Naive thymus-derived CD4-positive, alpha-beta T cell (primary cell): ENCODE measurements at regions of chr12 and their contacts with region 1.

Region 1: DNA sequence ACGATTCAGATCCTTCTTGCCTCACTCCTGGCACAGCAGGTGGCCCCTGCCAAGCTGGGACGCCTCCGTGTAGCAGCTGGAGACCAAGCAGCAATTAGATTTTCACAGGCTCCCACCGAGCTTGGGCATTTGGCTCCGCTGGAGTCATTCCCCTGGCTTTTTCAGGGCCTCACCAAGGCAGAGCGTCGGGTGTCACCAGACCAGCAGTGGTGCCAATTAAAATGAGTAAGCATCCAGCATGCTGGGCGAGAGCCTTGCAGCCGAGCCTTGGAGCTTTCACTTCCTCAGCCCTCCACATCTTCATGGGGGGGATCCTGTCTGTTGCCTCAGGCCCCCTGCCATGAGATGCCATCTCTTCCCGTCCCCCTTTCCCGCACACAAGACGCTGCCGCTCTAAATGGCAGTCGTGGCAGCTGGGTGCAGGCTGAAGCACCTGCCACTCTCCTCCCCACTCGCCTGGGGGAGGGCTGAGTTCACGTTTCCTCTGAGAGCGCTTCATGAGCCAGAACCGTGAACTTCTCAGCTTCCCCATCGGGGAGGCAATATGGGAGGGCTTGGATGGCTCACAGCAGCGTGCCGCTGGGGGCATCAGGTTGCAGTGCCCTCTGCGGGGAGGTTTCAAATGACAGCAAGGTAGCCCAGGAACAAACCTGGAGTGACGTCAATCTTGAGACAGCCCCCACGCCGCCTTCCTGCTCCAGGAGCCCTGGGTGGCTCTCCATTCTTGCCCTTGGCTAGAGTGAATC is 11.7 kb downstream of the TPCN1 start:
- DNase-seq: peak; percentile 46 to 91 (median 83)
- ATAC-seq: peak; percentile 95
- H3K4me3 ChIP-seq: peak overlapping the region; percentile 43
- H3K4me3 Mint-ChIP-seq: peak overlapping the region; percentile 81 to 94 (median 86)
- H3K27ac ChIP-seq: peak overlapping the region; percentile 68
- H3K27ac Mint-ChIP-seq: peak overlapping the region; percentile 86 to 96 (median 93)
- H3K4me1 ChIP-seq: peaks cover 7 to 60% of the 10 kb centered on the region in 2 donors
- H3K4me1 Mint-ChIP-seq: peaks cover 59 to 93% (median 75%) of the 10 kb centered on the region in 7 donors
- H3K27me3 ChIP-seq: no peaks in the 10 kb centered on the region
- H3K27me3 Mint-ChIP-seq: no peaks in the 10 kb centered on the region

Region 2: DNA sequence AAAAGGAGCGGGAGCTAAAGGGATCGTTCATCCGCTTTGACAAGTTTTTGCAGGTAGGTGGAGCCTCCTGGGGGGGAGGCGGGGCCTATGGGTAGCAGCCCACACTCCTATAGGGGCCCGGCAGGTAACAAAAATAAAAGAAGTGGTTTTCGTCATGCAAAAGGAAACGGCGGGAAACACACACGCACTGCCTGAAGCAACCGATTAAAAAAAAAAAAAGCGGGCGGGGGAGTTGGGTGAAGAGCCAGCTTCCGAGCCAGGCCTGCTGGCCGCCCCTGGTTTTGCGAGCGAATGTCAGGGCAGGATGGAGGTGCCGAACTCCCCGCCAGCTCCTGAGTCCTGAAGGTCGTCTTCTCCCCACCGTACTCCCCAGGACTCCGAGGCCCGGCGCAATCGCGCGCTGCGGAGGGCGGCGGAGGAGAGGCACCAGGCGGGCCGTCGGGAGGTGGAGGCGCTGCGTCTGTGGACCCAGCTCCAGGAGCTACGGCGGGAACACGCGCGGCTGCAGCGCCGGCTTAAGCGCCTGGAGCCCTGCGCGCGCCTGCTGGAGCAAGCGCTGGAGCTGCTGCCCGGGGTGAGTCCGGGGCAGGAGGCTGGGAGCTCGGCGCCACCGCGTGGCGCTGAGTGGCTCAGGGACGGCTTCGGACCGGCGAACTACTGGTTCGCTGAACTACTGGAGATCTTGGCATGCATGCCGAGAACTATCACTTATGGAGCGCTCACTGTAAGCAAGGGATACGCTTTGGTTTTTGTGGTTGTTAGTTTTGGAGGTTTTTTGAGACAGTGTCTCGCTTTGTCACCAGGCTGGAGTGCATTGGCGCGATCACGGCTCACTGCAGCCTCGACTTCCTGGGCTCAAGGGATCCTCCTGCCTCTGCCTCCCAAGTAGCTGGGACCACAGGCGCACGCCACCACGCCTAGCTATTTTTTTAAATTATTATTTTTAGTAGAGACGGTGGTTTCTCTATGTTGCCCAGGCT is 79.9 kb before region 1 on chr12:
- CTCF ChIA-PET with region 1: no interaction called
- POLR2A ChIA-PET with region 1: no interaction called
- intact Hi-C with region 1: no loop called
- DNase-seq: peak; percentile 36 to 86 (median 80)
- ATAC-seq: peak; percentile 94
- H3K4me3 ChIP-seq: peak overlapping the region; percentile 75
- H3K4me3 Mint-ChIP-seq: peak overlapping the region; percentile 76 to 88 (median 86)
- H3K27ac ChIP-seq: no peak overlapping the region
- H3K27ac Mint-ChIP-seq: peak overlapping the region in 6 of 9 donors; percentile 76 to 93 (median 85)
- H3K4me1 ChIP-seq: peaks cover 0 to 19% of the 10 kb centered on the region in 2 donors
- H3K4me1 Mint-ChIP-seq: peaks cover 0 to 27% (median 25%) of the 10 kb centered on the region in 7 donors
- H3K27me3 ChIP-seq: no peaks in the 10 kb centered on the region
- H3K27me3 Mint-ChIP-seq: peaks cover 0 to 36% (median 0%) of the 10 kb centered on the region in 5 donors

Region 3: GRCh38 chr12:113261847-113262470 is 28.9 kb after region 1 on chr12:
- CTCF ChIA-PET with region 1: interaction called, 6 read pairs
- POLR2A ChIA-PET with region 1: interaction called, 4 read pairs
- intact Hi-C with region 1: loop called (anchors 2 kb)
- DNase-seq: peak in 8 of 9 donors; percentile 25 to 63 (median 52)
- ATAC-seq: peak; percentile 72
- H3K4me3 ChIP-seq: peak overlapping the region; percentile 37
- H3K4me3 Mint-ChIP-seq: peak overlapping the region; percentile 55 to 88 (median 76)
- H3K27ac ChIP-seq: peak overlapping the region; percentile 58
- H3K27ac Mint-ChIP-seq: peak overlapping the region; percentile 77 to 95 (median 91)
- H3K4me1 ChIP-seq: peaks cover 14 to 53% of the 10 kb centered on the region in 2 donors
- H3K4me1 Mint-ChIP-seq: peaks cover 27 to 76% (median 55%) of the 10 kb centered on the region in 7 donors
- H3K27me3 ChIP-seq: no peaks in the 10 kb centered on the region
- H3K27me3 Mint-ChIP-seq: no peaks in the 10 kb centered on the region

Region 4: GRCh38 chr12:113276306-113276705 is 43.3 kb after region 1 on chr12:
- CTCF ChIA-PET with region 1: no interaction called
- POLR2A ChIA-PET with region 1: no interaction called
- intact Hi-C with region 1: loop called in 1 of 2 experiments (anchors 5 kb)
- DNase-seq: no peak
- ATAC-seq: no peak
- H3K4me3 ChIP-seq: no peak overlapping the region
- H3K4me3 Mint-ChIP-seq: no peak overlapping the region
- H3K27ac ChIP-seq: no peak overlapping the region
- H3K27ac Mint-ChIP-seq: no peak overlapping the region
- H3K4me1 ChIP-seq: no peaks in the 10 kb centered on the region
- H3K4me1 Mint-ChIP-seq: peaks cover 0 to 11% (median 5%) of the 10 kb centered on the region in 7 donors
- H3K27me3 ChIP-seq: no peaks in the 10 kb centered on the region
- H3K27me3 Mint-ChIP-seq: no peaks in the 10 kb centered on the region

Region 5: DNA sequence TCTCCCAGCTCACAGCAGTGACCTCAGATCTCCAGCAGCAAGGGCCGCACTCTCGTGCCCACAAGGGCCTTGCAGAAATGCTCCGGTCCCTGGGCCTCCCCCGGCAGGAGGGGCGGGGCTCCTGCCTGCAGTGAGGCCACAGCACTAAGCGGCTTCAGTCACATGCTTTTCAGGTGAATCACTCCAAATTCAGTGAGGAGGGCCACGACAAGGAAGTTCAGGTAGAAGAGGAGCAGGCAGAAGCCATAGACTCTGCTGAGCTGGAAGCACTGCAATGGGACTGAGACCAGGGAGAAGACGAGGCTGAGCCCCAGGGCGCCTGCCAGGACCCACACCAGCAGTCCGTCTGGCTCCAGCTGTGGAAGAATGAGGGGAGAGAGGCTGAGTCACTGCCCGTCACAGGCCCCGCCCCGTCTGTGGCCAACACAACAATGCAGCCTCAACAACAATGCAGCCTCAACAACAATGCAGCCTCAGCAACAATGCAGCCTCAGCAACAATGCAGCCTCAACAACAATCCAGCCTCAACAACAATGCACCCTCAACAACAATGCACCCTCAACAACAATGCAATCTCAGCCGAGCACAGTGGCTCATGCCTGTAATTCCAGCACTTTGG is 66.7 kb after region 1 on chr12:
- CTCF ChIA-PET with region 1: interaction called, 4 read pairs
- POLR2A ChIA-PET with region 1: no interaction called
- intact Hi-C with region 1: loop called in 1 of 2 experiments (anchors 5 kb)
- DNase-seq: no peak
- ATAC-seq: no peak
- H3K4me3 ChIP-seq: no peak overlapping the region
- H3K4me3 Mint-ChIP-seq: no peak overlapping the region
- H3K27ac ChIP-seq: no peak overlapping the region
- H3K27ac Mint-ChIP-seq: peak overlapping the region in 4 of 9 donors; percentile 58 to 69 (median 64)
- H3K4me1 ChIP-seq: peaks cover 0 to 14% of the 10 kb centered on the region in 2 donors
- H3K4me1 Mint-ChIP-seq: peaks cover 11 to 24% (median 18%) of the 10 kb centered on the region in 7 donors
- H3K27me3 ChIP-seq: no peaks in the 10 kb centered on the region
- H3K27me3 Mint-ChIP-seq: no peaks in the 10 kb centered on the region